K562 (cell line): ENCODE measurements at regions of chr2 and their contacts with region 1.

Region 1: GRCh38 chr2:144332356-144333142 is 187.4 kb downstream of the ZEB2 start:
- DNase-seq: peak; percentile 92 to 94 (median 92)
- ATAC-seq: peak; percentile 91
- H3K4me3 ChIP-seq: peak overlapping the region; percentile 60
- H3K27ac ChIP-seq: peak overlapping the region; percentile 95
- H3K4me1 ChIP-seq: peaks cover 6 to 9% of the 10 kb centered on the region in 2 experiments; a peak in 4 of 5 replicates
- H3K27me3 ChIP-seq: no peaks in the 10 kb centered on the region
- CTCF ChIP-seq: no peak
- EP300 ChIP-seq: no peak
- POLR2A ChIP-seq: peak; percentile 85
- RAD21 ChIP-seq: no peak

Region 2: DNA sequence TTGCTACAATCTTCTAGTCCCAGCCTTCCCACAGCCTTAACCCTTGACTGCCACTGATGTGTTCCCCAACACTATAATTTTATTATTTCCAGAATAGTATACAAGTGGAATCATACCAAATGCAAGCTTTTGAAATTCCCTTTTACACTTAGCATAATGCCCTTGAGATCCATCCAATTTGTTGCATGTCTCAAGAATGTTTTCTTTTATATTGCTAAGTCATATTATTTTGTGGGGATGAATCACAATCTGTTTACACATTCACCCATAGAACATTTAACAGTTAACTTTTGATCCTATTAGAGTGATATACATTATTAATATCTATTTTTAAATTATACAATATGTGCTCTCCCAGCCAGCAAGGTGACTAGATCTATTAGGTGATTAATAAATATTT is 1529.4 kb before region 1 on chr2:
- CTCF ChIA-PET with region 1: no interaction called
- POLR2A ChIA-PET with region 1: no interaction called
- in situ Hi-C with region 1: no loop called
- intact Hi-C with region 1: no loop called
- DNase-seq: no peak
- ATAC-seq: no peak
- H3K4me3 ChIP-seq: no peak overlapping the region
- H3K27ac ChIP-seq: no peak overlapping the region
- H3K4me1 ChIP-seq: no peaks in the 10 kb centered on the region
- H3K27me3 ChIP-seq: no peaks in the 10 kb centered on the region
- CTCF ChIP-seq: no peak
- EP300 ChIP-seq: no peak
- POLR2A ChIP-seq: no peak
- RAD21 ChIP-seq: no peak

Region 3: DNA sequence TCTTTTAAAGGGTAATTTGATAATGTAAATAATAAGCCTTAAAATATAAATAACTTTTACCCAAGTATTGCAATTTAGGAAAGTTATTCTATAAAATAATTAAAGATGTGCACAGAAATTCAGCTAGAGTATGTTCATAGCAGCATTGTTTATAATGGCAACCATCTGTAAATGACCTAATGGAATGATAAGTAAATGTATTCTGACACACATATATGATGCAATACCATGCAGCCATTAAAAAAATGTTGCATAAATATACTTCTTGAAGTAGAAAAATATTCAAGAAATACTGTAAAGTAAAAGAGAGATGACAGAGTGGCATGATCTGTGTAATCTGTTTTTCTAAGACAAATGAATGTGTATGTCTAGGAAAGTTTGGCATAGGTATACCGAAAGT is 358.3 kb before region 1 on chr2:
- CTCF ChIA-PET with region 1: no interaction called
- POLR2A ChIA-PET with region 1: no interaction called
- in situ Hi-C with region 1: no loop called
- intact Hi-C with region 1: no loop called
- DNase-seq: no peak
- ATAC-seq: no peak
- H3K4me3 ChIP-seq: no peak overlapping the region
- H3K27ac ChIP-seq: no peak overlapping the region
- H3K4me1 ChIP-seq: no peaks in the 10 kb centered on the region
- H3K27me3 ChIP-seq: no peaks in the 10 kb centered on the region
- CTCF ChIP-seq: no peak
- EP300 ChIP-seq: no peak
- POLR2A ChIP-seq: no peak
- RAD21 ChIP-seq: no peak

Region 4: DNA sequence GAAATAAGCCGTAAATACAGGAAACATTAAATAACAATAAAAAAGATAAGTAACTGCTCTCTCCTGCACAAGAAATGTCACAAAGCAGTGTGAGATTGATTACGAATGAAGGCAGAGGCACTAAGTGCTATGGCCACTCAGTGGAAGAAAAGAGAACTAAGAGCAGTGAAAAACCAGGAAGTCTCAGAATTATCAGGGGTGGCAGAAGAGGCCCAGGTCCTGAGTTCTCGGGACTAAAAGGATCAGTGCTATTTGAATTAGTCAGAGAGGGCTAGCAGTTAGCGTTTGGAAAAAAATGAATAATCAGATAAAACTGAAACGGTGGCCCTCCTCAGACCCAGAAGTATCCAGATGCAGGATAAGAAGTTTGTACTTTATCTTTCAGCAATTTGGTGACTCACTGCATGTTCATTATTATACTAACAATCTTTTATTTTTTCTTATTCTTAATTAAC is 179.7 kb before region 1 on chr2:
- CTCF ChIA-PET with region 1: no interaction called
- POLR2A ChIA-PET with region 1: no interaction called
- in situ Hi-C with region 1: no loop called
- intact Hi-C with region 1: loop called (anchors 5 kb)
- DNase-seq: peak in 3 of 4 experiments; percentile 10 to 84 (median 71)
- ATAC-seq: peak; percentile 91
- H3K4me3 ChIP-seq: no peak overlapping the region
- H3K27ac ChIP-seq: peak overlapping the region; percentile 65; the same call in 2 of the 3 replicates
- H3K4me1 ChIP-seq: peaks cover 0 to 26% of the 10 kb centered on the region in 2 experiments; a peak in 4 of 5 replicates
- H3K27me3 ChIP-seq: no peaks in the 10 kb centered on the region
- CTCF ChIP-seq: peak; percentile 30 to 44 (median 34); a peak in 3 of 6 replicates
- EP300 ChIP-seq: peak; percentile 83
- POLR2A ChIP-seq: no peak
- RAD21 ChIP-seq: peak; percentile 54 to 57

Region 5: DNA sequence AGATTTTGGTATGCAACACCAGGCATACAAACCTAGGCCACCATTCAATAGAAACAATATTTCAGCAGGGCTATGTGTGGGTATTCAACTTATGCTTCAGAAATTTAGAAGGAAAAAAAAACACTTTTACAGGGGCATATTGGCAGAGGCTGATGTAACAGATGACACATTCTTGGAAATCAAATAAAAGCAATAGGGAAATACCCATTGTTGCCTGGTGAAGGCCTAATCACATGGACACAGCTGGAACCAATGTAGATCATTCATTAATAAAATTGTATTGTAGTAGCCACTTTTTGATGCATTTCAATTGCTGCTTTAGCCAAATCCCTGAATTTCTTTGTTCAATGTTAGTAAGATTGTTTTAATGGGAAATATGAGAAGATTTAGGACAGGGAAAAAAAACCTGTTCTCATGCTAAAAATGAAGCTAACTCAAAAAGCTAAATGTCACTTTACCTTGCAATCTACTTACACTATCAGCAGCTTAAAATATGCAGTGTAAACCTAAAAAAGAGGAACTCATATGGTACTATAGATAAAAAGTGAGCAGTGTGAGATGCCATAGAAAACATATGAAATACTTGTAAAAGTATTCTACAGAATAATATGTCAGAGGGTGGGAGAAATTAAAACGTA is 102.0 kb before region 1 on chr2:
- CTCF ChIA-PET with region 1: no interaction called
- POLR2A ChIA-PET with region 1: no interaction called
- in situ Hi-C with region 1: no loop called
- intact Hi-C with region 1: loop called (anchors 2 kb)
- DNase-seq: peak in 2 of 4 experiments; percentile 30 to 41
- ATAC-seq: peak; percentile 78
- H3K4me3 ChIP-seq: no peak overlapping the region
- H3K27ac ChIP-seq: peak overlapping the region; percentile 75
- H3K4me1 ChIP-seq: peaks cover 0 to 36% of the 10 kb centered on the region in 2 experiments; a peak in 3 of 5 replicates
- H3K27me3 ChIP-seq: no peaks in the 10 kb centered on the region
- CTCF ChIP-seq: no peak
- EP300 ChIP-seq: peak; percentile 79
- POLR2A ChIP-seq: no peak
- RAD21 ChIP-seq: peak in 1 of 2 experiments; percentile 13; a peak in 2 of 4 replicates

Region 6: DNA sequence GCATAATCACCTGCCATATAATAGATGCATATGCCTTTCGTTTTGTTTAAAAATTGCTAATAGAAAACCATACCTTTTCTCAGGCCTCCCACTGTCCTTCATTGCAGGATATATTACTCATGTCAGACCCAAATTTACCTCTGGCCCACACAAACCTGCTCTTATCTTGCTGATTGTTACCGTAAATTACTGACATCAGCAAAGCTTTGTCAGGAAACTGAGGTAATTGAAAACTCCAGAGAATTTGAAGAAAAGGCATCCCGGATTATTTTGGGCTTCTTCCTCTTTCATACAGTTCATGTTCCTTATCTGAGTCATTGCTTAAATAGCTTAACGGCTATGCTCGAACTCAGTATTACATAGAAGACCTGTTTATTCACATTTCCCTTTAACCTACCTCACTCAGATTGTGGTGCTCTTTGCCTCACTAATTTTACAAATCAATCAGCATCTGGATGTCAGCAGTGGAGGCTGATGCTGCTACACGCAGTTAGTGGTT is 41.7 kb after region 1 on chr2:
- CTCF ChIA-PET with region 1: no interaction called
- POLR2A ChIA-PET with region 1: interaction called, 3 read pairs
- in situ Hi-C with region 1: no loop called
- intact Hi-C with region 1: loop called (anchors 5 kb)
- DNase-seq: no peak
- ATAC-seq: no peak
- H3K4me3 ChIP-seq: no peak overlapping the region
- H3K27ac ChIP-seq: peak overlapping the region; percentile 41; the same call in 2 of the 3 replicates
- H3K4me1 ChIP-seq: peaks cover 4 to 72% of the 10 kb centered on the region in 2 experiments
- H3K27me3 ChIP-seq: no peaks in the 10 kb centered on the region
- CTCF ChIP-seq: no peak
- EP300 ChIP-seq: no peak
- POLR2A ChIP-seq: no peak
- RAD21 ChIP-seq: no peak

Region 7: DNA sequence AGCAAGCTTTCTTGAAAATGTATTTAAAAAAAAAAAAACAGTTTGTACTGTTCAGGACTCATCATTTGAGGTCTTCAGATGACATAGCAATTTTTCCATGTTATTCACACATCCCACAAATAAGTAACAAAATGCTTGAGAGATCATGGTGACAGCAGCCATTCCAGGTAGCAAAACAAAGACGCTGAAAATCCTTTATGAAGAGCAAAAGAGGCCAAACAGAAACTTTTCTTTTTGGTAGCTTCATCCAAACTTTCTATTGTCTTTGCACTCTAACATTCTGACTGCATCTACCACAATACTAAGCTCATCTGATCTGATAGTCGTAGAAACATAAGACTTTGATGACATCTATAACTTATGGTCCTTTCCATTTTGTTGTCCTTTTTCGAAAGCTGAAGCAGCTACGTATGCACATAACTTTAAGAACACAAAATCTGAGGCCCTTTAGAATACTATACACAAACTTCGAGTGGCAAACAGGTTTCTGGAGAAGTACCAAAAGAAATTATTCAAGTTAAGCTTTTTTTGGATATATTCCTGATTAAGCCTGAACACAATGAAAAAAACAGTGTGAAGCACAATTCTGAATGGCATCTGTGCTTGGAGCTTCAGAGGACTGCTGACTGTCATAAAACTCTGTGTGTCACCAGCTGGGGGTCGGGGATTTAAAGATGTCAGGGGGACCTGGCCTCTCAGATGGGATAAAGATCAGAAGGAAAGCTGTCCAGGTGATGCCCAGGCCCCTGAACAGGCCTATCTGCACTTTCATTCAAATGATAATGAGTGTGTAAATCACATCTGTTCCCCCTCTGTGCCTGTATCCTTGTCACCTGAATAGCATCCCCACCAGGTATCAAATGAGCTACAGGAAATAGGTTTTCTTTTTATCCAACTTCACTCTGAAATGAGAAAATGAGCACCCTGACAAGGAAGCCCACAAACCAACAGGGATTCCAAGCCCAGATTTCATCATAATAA is 111.6 kb after region 1 on chr2:
- CTCF ChIA-PET with region 1: no interaction called
- POLR2A ChIA-PET with region 1: interaction called, 3 read pairs
- in situ Hi-C with region 1: no loop called
- intact Hi-C with region 1: loop called (anchors 2 kb)
- DNase-seq: no peak
- ATAC-seq: peak; percentile 3; the same call in 1 of the 3 replicates
- H3K4me3 ChIP-seq: no peak overlapping the region
- H3K27ac ChIP-seq: peak overlapping the region; percentile 37; the same call in 1 of the 3 replicates
- H3K4me1 ChIP-seq: peaks cover 15 to 34% of the 10 kb centered on the region in 2 experiments
- H3K27me3 ChIP-seq: no peaks in the 10 kb centered on the region
- CTCF ChIP-seq: no peak
- EP300 ChIP-seq: no peak
- POLR2A ChIP-seq: no peak
- RAD21 ChIP-seq: no peak

Region 8: DNA sequence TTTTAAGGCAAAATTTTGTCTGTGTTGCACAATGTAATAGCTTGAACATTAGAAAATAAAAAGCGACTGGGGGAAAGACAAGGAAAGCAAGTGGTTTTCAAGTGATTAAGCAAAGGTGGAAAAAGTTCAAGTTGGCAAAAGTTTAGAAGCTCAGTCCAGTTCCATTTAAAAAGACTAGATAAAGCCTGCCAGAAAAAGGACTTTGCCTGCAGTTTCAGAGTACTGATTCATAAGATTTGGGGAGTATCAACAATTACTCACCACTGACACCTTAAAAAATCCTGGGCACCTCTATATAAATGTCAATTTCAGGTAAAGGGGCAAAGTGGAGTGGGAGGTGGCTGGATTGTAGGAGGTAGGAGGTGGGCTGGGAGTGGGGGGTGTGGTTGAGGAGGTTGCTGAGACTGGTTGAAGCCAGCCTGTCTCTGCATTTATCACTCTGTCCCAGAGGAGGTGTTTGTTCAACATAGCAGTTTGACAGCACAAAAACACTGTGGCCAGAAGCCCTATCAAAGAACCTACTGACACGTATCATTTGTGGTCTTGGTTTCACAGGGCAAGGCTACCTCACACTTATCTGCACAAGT is 172.8 kb after region 1 on chr2:
- CTCF ChIA-PET with region 1: no interaction called
- POLR2A ChIA-PET with region 1: no interaction called
- in situ Hi-C with region 1: no loop called
- intact Hi-C with region 1: loop called (anchors 5 kb)
- DNase-seq: peak in 3 of 4 experiments; percentile 25 to 84 (median 66)
- ATAC-seq: peak; percentile 81
- H3K4me3 ChIP-seq: no peak overlapping the region
- H3K27ac ChIP-seq: peak overlapping the region; percentile 50
- H3K4me1 ChIP-seq: peaks cover 24 to 86% of the 10 kb centered on the region in 2 experiments
- H3K27me3 ChIP-seq: no peaks in the 10 kb centered on the region
- CTCF ChIP-seq: no peak
- EP300 ChIP-seq: peak; percentile 62; the same call in 1 of the 2 replicates
- POLR2A ChIP-seq: peak; percentile 39; the same call in 1 of the 2 replicates
- RAD21 ChIP-seq: no peak; a peak in 1 of 4 replicates